ENCODE measurements at regions of chr12 and their contacts with region 1.

Region 1: GRCh38 chr12:15882118-15882971 is at the start of gene STRAP:
- DNase-seq: peak; percentile 93 to 97
- ATAC-seq: peak; percentile 95 to 96
- H3K4me3 ChIP-seq: peak within 1 kb of the TSS; percentile 92 to 99 (median 97)
- H3K27ac ChIP-seq: peak within 1 kb of the TSS; percentile 91 to 100 (median 99)
- H3K4me1 ChIP-seq: peaks cover 33 to 34% of the 10 kb centered on the region in 2 donors
- H3K27me3 ChIP-seq: no peaks in the 10 kb centered on the region
- CTCF ChIP-seq: peak in 1 of 5 experiments; percentile 18
- POLR2A ChIP-seq: peak; percentile 96 to 98
- total RNA-seq, gene STRAP: 77.7 to 106 (median 102) TPM

Region 2: GRCh38 chr12:14774906-14775762 is 1107.2 kb before region 1 on chr12:
- in situ Hi-C with region 1: loop called in 1 of 4 experiments (anchors 25 kb)
- intact Hi-C with region 1: loop called (anchors 1 kb)
- DNase-seq: peak; percentile 27 to 50
- ATAC-seq: peak; percentile 8 to 10
- H3K4me3 ChIP-seq: peak overlapping the region; percentile 81 to 89 (median 84)
- H3K27ac ChIP-seq: peak overlapping the region; percentile 81 to 95 (median 94)
- H3K4me1 ChIP-seq: peaks cover 8 to 18% of the 10 kb centered on the region in 2 donors
- H3K27me3 ChIP-seq: no peaks in the 10 kb centered on the region
- CTCF ChIP-seq: no peak
- POLR2A ChIP-seq: peak in 1 of 2 donors; percentile 28

Region 3: GRCh38 chr12:15268927-15269552 is 613.3 kb before region 1 on chr12:
- in situ Hi-C with region 1: loop called in 1 of 4 experiments (anchors 25 kb)
- intact Hi-C with region 1: no loop called
- DNase-seq: peak in 1 of 2 donors; percentile 31
- ATAC-seq: peak; percentile 56 to 60
- H3K4me3 ChIP-seq: no peak overlapping the region
- H3K27ac ChIP-seq: no peak overlapping the region
- H3K4me1 ChIP-seq: peaks cover 0 to 3% of the 10 kb centered on the region in 2 donors
- H3K27me3 ChIP-seq: no peaks in the 10 kb centered on the region
- CTCF ChIP-seq: peak; percentile 66 to 86 (median 75)
- POLR2A ChIP-seq: no peak